Activated T-helper 1 cell treated with anti-CD3 and anti-CD28 coated beads, Interleukin-12 subunit alpha, Interleukin-12 subunit beta, Interleukin-2, Interleukin-4 antibody, amounts not matched to agents 30 ng/mL and 10 ng/mL and 1 ng/mL, durations not matched to agents 14 hours and 24 hours and 36 hours (primary cell): ENCODE measurements at regions of chr1 and their contacts with region 1.

Region 1: GRCh38 chr1:185317034-185317885 is at the start of gene IVNS1ABP:
- DNase-seq: peak; percentile 92
- H3K4me3 Mint-ChIP-seq: peak within 1 kb of the TSS; percentile 94
- H3K27ac Mint-ChIP-seq: peak within 1 kb of the TSS; percentile 97
- H3K4me1 Mint-ChIP-seq: peaks cover 50% of the 10 kb centered on the region
- H3K27me3 Mint-ChIP-seq: no peaks in the 10 kb centered on the region
- total RNA-seq, gene IVNS1ABP: 207 and 225 TPM in 2 replicates

Region 2: GRCh38 chr1:184973272-184974055 is 343.8 kb before region 1 on chr1:
- intact Hi-C with region 1: loop called (anchors 2 kb)
- DNase-seq: no peak
- H3K4me3 Mint-ChIP-seq: peak overlapping the region; percentile 90
- H3K27ac Mint-ChIP-seq: peak overlapping the region; percentile 95
- H3K4me1 Mint-ChIP-seq: peaks cover 67% of the 10 kb centered on the region
- H3K27me3 Mint-ChIP-seq: peaks cover 15% of the 10 kb centered on the region

Region 3: DNA sequence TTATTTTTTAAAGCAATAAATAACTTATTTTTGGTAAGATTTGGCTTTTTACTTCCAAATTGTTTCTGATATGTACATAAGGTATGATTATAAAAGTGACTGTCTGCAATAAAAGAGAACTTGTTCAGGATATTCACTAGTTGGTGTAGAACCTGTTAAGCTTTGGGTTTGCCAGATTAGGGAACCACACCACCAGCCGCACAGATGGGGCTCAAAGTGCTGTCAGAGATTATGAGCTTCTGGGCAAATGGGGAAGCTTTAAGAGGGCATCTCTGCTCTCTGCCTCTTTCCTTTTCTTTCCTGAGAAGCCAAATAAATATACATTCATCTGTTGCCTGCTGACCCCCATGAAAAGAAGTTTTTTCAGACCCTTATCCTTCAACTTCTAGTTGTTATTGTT is 25.6 kb before region 1 on chr1:
- intact Hi-C with region 1: no loop called
- DNase-seq: no peak
- H3K4me3 Mint-ChIP-seq: no peak overlapping the region
- H3K27ac Mint-ChIP-seq: no peak overlapping the region
- H3K4me1 Mint-ChIP-seq: peaks cover 21% of the 10 kb centered on the region
- H3K27me3 Mint-ChIP-seq: no peaks in the 10 kb centered on the region

Region 4: GRCh38 chr1:185305419-185305818 is 11.8 kb before region 1 on chr1:
- intact Hi-C with region 1: loop called (anchors 1 kb)
- DNase-seq: no peak
- H3K4me3 Mint-ChIP-seq: no peak overlapping the region
- H3K27ac Mint-ChIP-seq: peak overlapping the region; percentile 72
- H3K4me1 Mint-ChIP-seq: peaks cover 39% of the 10 kb centered on the region
- H3K27me3 Mint-ChIP-seq: no peaks in the 10 kb centered on the region

Region 5: GRCh38 chr1:185420588-185421081 is 103.4 kb after region 1 on chr1:
- intact Hi-C with region 1: loop called (anchors 1 kb)
- DNase-seq: peak; percentile 49
- H3K4me3 Mint-ChIP-seq: peak overlapping the region; percentile 17
- H3K27ac Mint-ChIP-seq: peak overlapping the region; percentile 77
- H3K4me1 Mint-ChIP-seq: peaks cover 76% of the 10 kb centered on the region
- H3K27me3 Mint-ChIP-seq: no peaks in the 10 kb centered on the region

Region 6: DNA sequence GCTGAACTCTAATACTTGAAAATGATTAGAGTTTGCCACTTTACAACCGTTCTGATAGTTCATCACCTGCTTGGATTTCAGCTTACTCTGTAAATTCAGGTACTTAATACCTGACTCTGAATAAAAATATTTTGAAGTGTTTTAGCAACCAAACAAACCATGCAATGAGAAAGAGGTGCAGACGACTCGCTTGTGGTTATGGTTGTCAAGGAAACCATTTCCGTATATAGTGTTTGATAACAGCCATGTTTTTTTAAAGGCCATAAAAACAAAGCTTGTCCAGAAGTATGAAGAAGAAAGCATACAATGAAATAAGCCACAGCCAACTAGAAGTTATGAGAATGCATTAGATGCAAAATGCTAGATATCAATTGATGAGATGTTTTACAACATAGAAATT is 249.7 kb after region 1 on chr1:
- intact Hi-C with region 1: loop called (anchors 1 kb)
- DNase-seq: peak; percentile 52
- H3K4me3 Mint-ChIP-seq: peak overlapping the region; percentile 44
- H3K27ac Mint-ChIP-seq: peak overlapping the region; percentile 82
- H3K4me1 Mint-ChIP-seq: peaks cover 58% of the 10 kb centered on the region
- H3K27me3 Mint-ChIP-seq: no peaks in the 10 kb centered on the region

Region 7: GRCh38 chr1:185681034-185681633 is 363.9 kb after region 1 on chr1:
- intact Hi-C with region 1: loop called (anchors 1 kb)
- DNase-seq: peak; percentile 20
- H3K4me3 Mint-ChIP-seq: no peak overlapping the region
- H3K27ac Mint-ChIP-seq: no peak overlapping the region
- H3K4me1 Mint-ChIP-seq: peaks cover 21% of the 10 kb centered on the region
- H3K27me3 Mint-ChIP-seq: peaks cover 14% of the 10 kb centered on the region